ENCODE measurements at regions of chr20 and their contacts with region 1.

Region 1: DNA sequence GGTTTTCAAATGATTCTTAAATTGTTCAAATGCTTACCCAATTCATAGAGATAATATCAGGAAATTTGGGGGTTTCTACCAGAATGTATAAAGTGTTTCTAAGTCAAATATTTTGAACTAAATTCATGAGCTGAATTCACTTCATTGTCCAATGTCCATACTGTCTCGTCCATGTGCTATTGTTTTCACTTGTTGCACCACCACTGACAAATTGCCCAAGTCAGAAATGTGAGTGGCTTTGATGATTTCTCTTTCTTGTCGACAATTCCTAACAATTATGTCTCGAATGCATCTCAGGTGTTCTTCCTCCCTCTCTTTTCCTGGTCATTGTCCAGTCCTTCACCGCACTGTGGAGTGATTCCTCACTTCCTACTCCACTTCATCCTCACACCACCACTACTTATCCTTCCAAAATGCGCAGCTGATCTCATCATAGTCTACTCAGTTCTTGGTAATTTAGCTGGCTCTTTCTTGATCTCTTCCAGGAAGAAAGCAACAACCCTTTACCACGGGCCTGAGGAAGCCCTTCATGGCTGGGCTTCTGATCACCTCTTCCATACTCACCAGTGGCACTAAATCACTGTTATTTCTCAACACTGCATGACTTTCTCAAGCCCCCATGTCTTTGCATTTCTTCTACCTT is 161.1 kb downstream of the FOXA2 start:
- DNase-seq: no peak
- H3K27ac ChIP-seq: no peak overlapping the region
- CTCF ChIP-seq: no peak

Region 2: DNA sequence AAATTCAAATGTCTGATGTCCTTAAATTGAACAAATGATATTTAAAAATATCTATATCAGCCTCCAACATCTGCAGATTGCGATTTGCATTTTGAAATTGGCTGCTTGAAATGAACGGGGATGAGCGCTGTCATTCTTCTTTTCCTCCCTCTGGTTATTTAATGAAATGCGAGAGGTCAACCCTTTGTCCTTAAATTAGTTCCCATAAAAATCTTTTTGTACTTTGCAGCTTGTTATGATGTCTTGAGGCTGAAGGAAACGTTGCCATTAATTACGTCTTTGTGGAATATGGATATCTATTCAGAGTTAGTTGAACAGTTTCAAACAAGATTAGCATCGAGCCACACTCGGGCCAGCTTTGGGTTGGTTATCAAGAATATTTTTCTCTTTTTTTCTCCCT is 1457.1 kb before region 1 on chr20:
- CTCF ChIA-PET with region 1: interaction called, 10 read pairs
- POLR2A ChIA-PET with region 1: no interaction called
- DNase-seq: no peak
- H3K27ac ChIP-seq: no peak overlapping the region
- CTCF ChIP-seq: no peak